B cell (primary cell): ENCODE measurements at regions of chr16 and their contacts with region 1.

Region 1: DNA sequence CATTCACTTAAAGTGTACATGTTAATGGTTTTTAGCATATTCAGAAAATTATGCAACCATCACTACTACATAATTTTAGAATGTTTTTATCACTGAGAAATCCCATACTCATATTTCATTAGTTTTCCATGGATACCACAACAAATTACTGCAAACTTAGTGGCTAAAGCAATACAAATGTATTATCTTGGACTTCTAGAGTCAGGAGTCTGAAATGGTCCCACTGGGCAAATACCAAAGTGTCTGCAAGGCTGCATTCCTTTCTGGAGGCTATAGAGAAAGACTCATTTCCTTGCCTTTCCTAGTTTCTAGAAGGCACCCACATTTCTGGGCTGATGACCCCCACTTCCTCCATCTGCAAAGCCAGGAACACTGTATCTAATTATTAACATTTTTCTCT is 16.9 kb upstream of the GNAO1 start:
- DNase-seq: no peak
- ATAC-seq: no peak
- H3K4me3 ChIP-seq: no peak overlapping the region
- H3K4me3 Mint-ChIP-seq: no peak overlapping the region
- H3K27ac ChIP-seq: no peak overlapping the region
- H3K27ac Mint-ChIP-seq: no peak overlapping the region
- H3K4me1 ChIP-seq: no peaks in the 10 kb centered on the region
- H3K4me1 Mint-ChIP-seq: no peaks in the 10 kb centered on the region
- H3K27me3 ChIP-seq: peaks cover 0 to 6% (median 3%) of the 10 kb centered on the region in 4 experiments
- H3K27me3 Mint-ChIP-seq: peaks cover 17% of the 10 kb centered on the region
- CTCF ChIP-seq: no peak

Region 2: DNA sequence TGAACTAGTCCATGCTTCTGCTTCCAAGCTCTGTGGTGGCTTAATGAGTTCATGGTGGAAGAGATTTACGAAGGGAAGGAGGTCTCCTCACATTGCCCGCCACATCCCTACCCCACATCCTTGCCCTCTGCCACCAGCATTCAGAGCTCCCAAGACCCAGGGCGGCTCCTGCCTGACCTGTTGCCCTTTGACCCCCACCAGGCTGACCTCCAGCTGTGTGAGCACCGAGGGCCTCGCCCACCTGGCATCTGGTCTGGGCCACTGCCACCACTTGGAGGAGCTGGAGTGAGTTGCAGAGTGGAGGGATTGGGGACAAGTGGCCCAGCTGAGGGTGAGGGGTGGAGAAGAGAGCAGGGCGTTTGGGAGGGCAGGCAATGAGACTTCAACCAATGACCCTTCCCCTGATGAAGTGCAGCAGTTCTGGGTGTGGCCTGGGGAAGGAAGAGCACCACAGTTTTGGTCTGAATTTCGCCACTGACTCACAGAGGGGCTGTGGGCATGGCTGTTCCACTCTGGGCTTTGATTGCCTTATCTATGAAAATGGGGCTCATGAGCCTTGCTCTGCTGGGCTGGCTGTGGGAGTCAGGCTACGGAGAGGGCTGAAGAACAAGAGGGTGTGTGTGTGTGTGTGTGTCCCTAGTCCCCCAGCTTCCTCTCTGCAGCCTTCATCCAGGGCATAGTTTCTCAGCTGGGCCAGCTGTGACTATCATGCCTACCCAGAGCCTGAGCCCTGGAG is 895.4 kb after region 1 on chr16:
- CTCF ChIA-PET with region 1: no interaction called
- POLR2A ChIA-PET with region 1: interaction called, 12 read pairs
- intact Hi-C with region 1: no loop called
- DNase-seq: no peak
- ATAC-seq: no peak
- H3K4me3 ChIP-seq: no peak overlapping the region
- H3K4me3 Mint-ChIP-seq: no peak overlapping the region
- H3K27ac ChIP-seq: no peak overlapping the region
- H3K27ac Mint-ChIP-seq: peak overlapping the region; percentile 20
- H3K4me1 ChIP-seq: peaks cover 0 to 15% of the 10 kb centered on the region in 2 donors
- H3K4me1 Mint-ChIP-seq: peaks cover 9% of the 10 kb centered on the region
- H3K27me3 ChIP-seq: no peaks in the 10 kb centered on the region
- H3K27me3 Mint-ChIP-seq: no peaks in the 10 kb centered on the region
- CTCF ChIP-seq: no peak